Esophagus squamous epithelium (tissue), 5 donors: ENCODE measurements at regions of chr18 and their contacts with region 1.

Region 1: GRCh38 chr18:79528846-79529245 is 133.1 kb downstream of the NFATC1 start:
- DNase-seq: no peak
- H3K4me3 ChIP-seq: no peak overlapping the region
- H3K27ac ChIP-seq: no peak overlapping the region
- H3K4me1 ChIP-seq: peaks cover 8 to 24% (median 9%) of the 10 kb centered on the region in 3 donors
- H3K27me3 ChIP-seq: peaks cover 0 to 68% (median 0%) of the 10 kb centered on the region in 4 donors
- CTCF ChIP-seq: peak; percentile 73 to 92 (median 88)
- POLR2A ChIP-seq: no peak

Region 2: GRCh38 chr18:79380816-79381806 is 147.7 kb before region 1 on chr18:
- intact Hi-C with region 1: loop called (anchors 5 kb)
- DNase-seq: no peak
- H3K4me3 ChIP-seq: no peak overlapping the region
- H3K27ac ChIP-seq: no peak overlapping the region
- H3K4me1 ChIP-seq: peaks cover 0 to 17% (median 5%) of the 10 kb centered on the region in 3 donors
- H3K27me3 ChIP-seq: peaks cover 0 to 33% (median 0%) of the 10 kb centered on the region in 4 donors
- CTCF ChIP-seq: peak; percentile 71 to 89 (median 83)
- POLR2A ChIP-seq: no peak

Region 3: GRCh38 chr18:79644006-79644665 is 115.3 kb after region 1 on chr18:
- intact Hi-C with region 1: loop called (anchors 10 kb)
- DNase-seq: no peak
- H3K4me3 ChIP-seq: no peak overlapping the region
- H3K27ac ChIP-seq: no peak overlapping the region
- H3K4me1 ChIP-seq: peaks cover 0 to 6% (median 0%) of the 10 kb centered on the region in 3 donors
- H3K27me3 ChIP-seq: peaks cover 0 to 41% (median 0%) of the 10 kb centered on the region in 4 donors
- CTCF ChIP-seq: peak; percentile 84 to 94 (median 92)
- POLR2A ChIP-seq: no peak